ENCODE measurements at regions of chr2 and their contacts with region 1.

Region 1: DNA sequence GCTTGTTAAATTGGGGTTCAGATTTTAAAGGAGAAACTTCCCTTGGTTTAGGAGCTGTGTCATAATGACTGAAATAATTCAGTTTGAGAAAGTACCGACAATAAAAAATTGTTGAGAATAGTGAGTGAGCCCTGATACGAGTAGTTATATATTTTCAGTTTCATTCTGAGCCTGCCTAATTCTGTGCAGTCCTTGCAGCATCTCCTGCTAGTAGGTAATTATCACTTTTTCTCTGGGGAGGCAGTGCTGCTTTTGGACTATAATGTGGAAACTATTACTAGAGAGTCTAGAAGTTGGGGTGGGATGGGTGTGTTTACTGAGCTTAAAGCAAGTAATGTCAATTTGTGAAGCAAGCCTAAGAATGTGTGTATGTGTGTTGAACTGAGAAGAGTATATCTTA is 21.7 kb downstream of the ZNF638 start:
- DNase-seq: no peak
- H3K4me3 ChIP-seq: no peak overlapping the region
- CTCF ChIP-seq: no peak

Region 2: DNA sequence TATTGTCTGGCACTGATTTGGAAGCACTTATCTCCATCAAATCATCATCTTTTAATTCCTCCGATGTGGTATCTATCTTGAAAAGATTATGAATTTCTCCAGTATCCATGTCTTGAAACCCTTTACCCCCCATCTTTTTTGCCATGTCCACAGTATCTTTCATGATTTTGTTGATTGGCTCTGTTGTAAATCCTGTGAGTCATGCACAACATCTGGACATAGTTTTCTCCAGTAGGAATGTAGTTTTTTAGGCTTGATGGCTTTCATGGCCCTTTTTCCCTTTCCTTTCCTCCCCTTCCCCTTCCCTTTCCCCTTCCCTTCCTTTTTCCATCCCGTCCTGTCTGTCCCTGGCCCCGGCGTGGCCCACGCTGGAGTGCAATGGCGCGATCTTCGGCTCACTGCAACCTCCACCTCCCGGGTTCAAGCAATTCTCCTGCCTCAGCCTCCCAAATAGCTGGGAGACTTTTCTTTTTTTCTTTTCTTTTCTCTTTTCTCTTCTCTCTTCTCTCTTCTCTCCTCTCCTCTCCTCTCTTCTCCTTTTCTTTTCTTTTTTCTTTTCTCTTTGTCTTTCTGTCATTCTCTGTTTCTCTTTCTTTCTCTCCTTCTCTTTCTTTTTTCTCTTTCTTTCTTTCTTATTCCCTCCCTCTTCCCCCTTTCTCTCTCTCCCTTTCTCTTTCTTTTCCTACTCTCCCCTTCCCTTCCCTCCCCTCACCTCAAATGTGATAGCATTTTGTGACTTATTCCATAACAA is 40.1 kb before region 1 on chr2:
- in situ Hi-C with region 1: loop called (anchors 5 kb)
- DNase-seq: no peak
- H3K4me3 ChIP-seq: no peak overlapping the region
- CTCF ChIP-seq: no peak

Region 3: DNA sequence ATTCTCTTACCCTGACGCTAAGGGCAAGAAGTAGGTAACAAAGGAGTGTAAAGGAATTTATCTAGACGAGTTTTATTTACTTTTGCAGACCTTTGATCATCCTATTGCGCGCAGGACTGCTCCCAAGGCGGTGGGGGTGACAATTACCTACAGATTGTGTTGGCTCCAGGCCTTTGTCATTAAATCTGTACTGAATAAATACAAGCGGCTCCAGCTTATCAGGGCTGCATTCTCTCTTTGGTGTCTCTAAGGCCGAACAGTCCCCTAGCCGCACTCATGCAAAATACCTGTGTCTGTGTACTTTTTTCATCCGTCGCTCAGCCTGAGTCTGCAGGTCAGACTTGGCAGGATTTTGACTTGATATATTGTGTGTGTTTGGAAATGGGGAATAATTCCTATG is 42.2 kb after region 1 on chr2:
- in situ Hi-C with region 1: loop called (anchors 5 kb)
- DNase-seq: no peak
- H3K4me3 ChIP-seq: no peak overlapping the region
- CTCF ChIP-seq: no peak